ENCODE measurements at regions of chr2 and their contacts with region 1.

Region 1: DNA sequence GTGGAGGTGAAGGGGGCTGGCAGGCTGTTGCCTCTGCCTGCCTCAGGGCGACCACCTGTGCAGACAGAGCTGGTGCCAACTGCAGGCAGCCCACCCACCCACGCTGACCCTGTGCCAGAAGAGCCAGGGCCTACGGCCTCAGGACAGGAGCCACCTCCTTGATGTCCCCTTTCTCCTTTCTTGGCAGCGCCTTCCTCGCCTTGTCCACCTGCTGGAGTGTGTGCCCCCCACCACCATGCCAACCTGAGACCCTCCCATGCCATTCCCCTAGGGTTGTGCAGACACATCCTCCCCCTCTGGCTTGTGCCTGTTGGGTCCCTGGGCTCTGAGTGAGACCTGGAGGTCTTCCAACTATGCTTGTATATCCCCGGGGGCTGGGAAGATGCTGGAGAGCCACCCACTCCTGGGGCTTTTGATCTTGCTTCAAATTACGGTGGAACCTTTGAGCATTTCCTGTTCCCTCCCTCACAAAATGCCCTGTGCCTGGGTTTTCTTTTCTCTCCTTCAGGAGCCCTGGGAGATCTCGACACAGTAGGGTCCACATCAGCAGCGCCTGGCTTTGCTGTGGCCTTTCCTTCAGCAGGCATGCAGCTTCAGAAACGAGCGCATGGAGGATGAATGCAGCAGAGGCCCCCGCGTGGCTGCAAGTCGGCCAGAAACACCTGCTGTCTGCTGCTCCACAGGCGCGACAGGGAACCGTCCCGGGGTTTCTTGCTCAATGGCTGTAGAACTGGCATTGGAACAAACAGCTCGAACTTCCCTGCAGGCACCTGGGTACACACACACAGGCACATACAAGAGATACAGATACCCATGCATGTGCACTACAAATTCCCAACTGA is 65.9 kb upstream of the SH3RF3 start:
- DNase-seq: no peak
- H3K4me3 ChIP-seq: no peak overlapping the region
- CTCF ChIP-seq: no peak

Region 2: GRCh38 chr2:109009920-109010610 is 53.0 kb before region 1 on chr2:
- in situ Hi-C with region 1: no loop called
- DNase-seq: no peak
- H3K4me3 ChIP-seq: no peak overlapping the region
- CTCF ChIP-seq: no peak

Region 3: GRCh38 chr2:109020217-109020637 is 42.9 kb before region 1 on chr2:
- in situ Hi-C with region 1: loop called (anchors 5 kb)
- DNase-seq: peak; percentile 54
- H3K4me3 ChIP-seq: no peak overlapping the region
- CTCF ChIP-seq: no peak